Breast epithelium (tissue), 4 donors: ENCODE measurements at regions of chr1 and their contacts with region 1.

Region 1: GRCh38 chr1:210272666-210273065 is 40.1 kb downstream of the SERTAD4 start:
- DNase-seq: no peak
- H3K4me3 ChIP-seq: no peak overlapping the region
- H3K27ac ChIP-seq: no peak overlapping the region
- H3K4me1 ChIP-seq: no peaks in the 10 kb centered on the region
- H3K27me3 ChIP-seq: no peaks in the 10 kb centered on the region
- CTCF ChIP-seq: no peak
- POLR2A ChIP-seq: no peak

Region 2: DNA sequence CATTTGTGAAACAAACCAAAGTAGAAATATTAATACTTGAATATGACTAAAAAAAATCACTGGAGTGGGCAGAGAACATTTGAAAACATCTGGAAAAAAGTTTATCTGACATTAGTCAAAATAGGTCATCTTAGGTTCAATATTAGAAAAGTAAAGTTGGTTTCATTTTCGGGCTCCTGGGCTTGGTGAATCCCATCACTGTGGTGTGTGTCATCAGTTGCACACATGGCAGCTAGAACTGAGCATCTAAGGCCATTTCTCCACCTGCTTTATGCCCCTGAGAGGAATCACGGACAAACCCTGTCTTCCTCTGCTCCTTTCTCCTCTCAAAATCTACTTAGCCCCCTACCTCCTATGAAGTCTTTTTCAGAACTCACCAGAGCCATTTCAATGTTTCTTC is 562.6 kb before region 1 on chr1:
- intact Hi-C with region 1: no loop called
- DNase-seq: no peak
- H3K4me3 ChIP-seq: no peak overlapping the region
- H3K27ac ChIP-seq: no peak overlapping the region
- H3K4me1 ChIP-seq: no peaks in the 10 kb centered on the region
- H3K27me3 ChIP-seq: no peaks in the 10 kb centered on the region
- CTCF ChIP-seq: no peak
- POLR2A ChIP-seq: no peak

Region 3: DNA sequence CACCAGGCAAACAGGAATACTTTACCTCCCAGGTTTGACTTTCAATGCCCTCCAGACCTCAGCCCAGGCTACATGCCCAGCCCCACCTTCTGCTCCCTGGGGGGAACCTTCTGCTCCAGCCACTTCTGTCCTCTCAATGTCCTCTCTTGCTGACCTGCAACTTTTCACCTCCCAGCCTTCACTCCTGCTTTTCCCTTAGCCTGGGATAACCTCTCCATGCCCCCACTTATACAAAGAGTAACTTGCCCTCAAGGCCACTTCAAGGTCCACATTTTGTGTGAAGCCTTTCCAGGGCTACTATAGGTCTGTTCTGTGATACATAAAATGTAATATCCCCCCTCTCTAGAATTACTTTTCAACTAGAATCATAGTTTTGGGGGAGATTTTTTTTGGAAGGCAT is 18.4 kb before region 1 on chr1:
- intact Hi-C with region 1: loop called (anchors 1 kb)
- DNase-seq: no peak
- H3K4me3 ChIP-seq: no peak overlapping the region
- H3K27ac ChIP-seq: no peak overlapping the region
- H3K4me1 ChIP-seq: peaks cover 4 to 9% of the 10 kb centered on the region in 2 donors
- H3K27me3 ChIP-seq: no peaks in the 10 kb centered on the region
- CTCF ChIP-seq: no peak
- POLR2A ChIP-seq: no peak

Region 4: GRCh38 chr1:210303391-210303790 is 30.7 kb after region 1 on chr1:
- intact Hi-C with region 1: loop called (anchors 1 kb)
- DNase-seq: no peak
- H3K4me3 ChIP-seq: no peak overlapping the region
- H3K27ac ChIP-seq: no peak overlapping the region
- H3K4me1 ChIP-seq: no peaks in the 10 kb centered on the region
- H3K27me3 ChIP-seq: no peaks in the 10 kb centered on the region
- CTCF ChIP-seq: no peak
- POLR2A ChIP-seq: no peak

Region 5: GRCh38 chr1:210328746-210329503 is 56.3 kb after region 1 on chr1 and contains the start of gene HHAT:
- intact Hi-C with region 1: no loop called
- DNase-seq: peak; percentile 74 to 81
- H3K4me3 ChIP-seq: peak within 1 kb of the TSS; percentile 70 to 84 (median 75)
- H3K27ac ChIP-seq: peak within 1 kb of the TSS; percentile 94 to 97
- H3K4me1 ChIP-seq: no peaks in the 10 kb centered on the region
- H3K27me3 ChIP-seq: no peaks in the 10 kb centered on the region
- CTCF ChIP-seq: no peak
- POLR2A ChIP-seq: no peak
- total RNA-seq, gene HHAT: 3.8 to 31.6 (median 15.1) TPM